ENCODE measurements at regions of chr9 and their contacts with region 1.

Region 1: DNA sequence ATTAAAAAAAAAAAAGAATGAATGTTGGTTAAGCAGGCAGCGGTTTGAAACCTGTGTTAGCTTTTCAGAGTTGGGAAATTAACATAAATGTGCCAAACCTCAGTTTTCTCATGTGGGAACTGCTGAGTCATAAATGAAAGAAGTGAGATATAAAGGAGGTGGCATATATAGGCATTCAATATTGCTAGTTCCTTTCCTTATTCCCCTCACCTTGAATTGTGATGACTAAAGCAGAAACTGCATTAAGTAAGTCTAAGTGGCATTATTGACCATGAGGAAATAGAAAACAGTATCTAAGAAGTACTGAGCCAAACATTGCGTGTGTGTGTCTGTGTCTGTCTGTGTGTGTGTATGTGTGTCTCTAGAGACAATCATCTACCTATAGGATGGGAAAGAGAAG is 691.2 kb downstream of the TLR4 start:
- DNase-seq: no peak
- ATAC-seq: no peak
- H3K4me3 ChIP-seq: no peak overlapping the region
- H3K27ac ChIP-seq: no peak overlapping the region
- H3K4me1 ChIP-seq: no peaks in the 10 kb centered on the region
- H3K27me3 ChIP-seq: no peaks in the 10 kb centered on the region

Region 2: DNA sequence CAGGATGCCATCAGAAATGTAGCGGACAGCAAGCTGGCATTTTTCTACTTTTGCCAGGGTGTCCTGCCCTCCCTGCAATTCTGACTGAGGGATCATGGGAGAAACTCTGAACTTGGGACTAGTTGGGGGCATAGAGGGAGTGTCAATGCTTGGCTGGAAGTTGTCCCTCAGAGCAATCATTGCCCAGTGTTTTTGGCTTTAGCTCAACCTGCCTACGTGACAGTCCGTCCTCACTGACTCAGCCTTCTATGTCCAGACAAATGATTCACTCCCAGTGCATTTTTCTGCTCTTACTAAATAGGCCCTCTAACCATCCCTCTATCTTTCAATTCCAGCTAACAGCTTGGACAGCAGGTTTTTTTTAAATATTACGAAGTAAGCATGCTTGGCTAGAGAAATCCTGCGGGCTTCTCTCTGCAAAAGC is 63.8 kb before region 1 on chr9:
- intact Hi-C with region 1: no loop called
- DNase-seq: peak; percentile 9 to 37 (median 30)
- ATAC-seq: peak; percentile 90 to 92
- H3K4me3 ChIP-seq: no peak overlapping the region
- H3K27ac ChIP-seq: no peak overlapping the region
- H3K4me1 ChIP-seq: no peaks in the 10 kb centered on the region
- H3K27me3 ChIP-seq: no peaks in the 10 kb centered on the region

Region 3: GRCh38 chr9:118446943-118447639 is 51.7 kb after region 1 on chr9:
- intact Hi-C with region 1: loop called in 1 of 4 experiments (anchors 10 kb)
- DNase-seq: no peak
- ATAC-seq: no peak
- H3K4me3 ChIP-seq: no peak overlapping the region
- H3K27ac ChIP-seq: no peak overlapping the region
- H3K4me1 ChIP-seq: no peaks in the 10 kb centered on the region
- H3K27me3 ChIP-seq: no peaks in the 10 kb centered on the region

Measured in right cardiac atrium (tissue), 5 donors.